ENCODE measurements at regions of chr4 and their contacts with region 1.

Region 1: DNA sequence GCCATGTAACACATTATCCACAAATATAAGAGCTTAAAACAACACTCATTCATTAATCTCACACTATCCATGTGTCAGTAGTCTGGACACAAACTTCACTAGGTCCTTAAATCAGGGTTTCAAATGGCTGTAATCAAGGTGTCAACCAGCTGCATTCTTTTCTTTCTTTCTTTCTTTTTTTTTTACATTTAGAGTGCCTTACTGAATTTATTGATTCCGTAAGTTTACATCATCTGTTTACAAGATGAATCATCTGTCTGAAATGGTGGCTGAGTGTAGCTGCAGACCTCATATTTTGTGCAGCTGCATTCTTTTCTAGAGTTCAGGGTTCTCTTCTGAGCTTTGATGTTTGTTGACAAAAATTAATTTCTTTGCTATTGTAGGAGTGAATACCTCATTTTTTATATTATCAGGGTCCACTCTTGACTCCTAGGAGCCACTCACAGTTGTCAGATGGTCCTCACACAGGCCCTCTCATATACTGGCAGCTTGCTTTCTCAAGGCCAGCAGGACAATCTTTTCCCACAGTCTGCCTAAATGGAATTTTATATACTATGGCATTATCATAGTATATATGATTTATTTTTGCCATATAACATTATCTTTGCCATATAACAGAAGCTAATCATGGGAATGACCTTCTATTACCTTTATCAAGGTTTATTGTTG is 37.8 kb downstream of the SPOCK3 start:
- DNase-seq: no peak
- H3K4me3 ChIP-seq: no peak overlapping the region
- H3K27ac ChIP-seq: no peak overlapping the region
- H3K4me1 ChIP-seq: no peaks in the 10 kb centered on the region
- H3K27me3 ChIP-seq: no peaks in the 10 kb centered on the region
- CTCF ChIP-seq: no peak
- POLR2A ChIP-seq: no peak

Region 2: GRCh38 chr4:167183036-167183435 is 13.4 kb before region 1 on chr4:
- CTCF ChIA-PET with region 1: interaction called, 3 read pairs
- POLR2A ChIA-PET with region 1: no interaction called
- dilution Hi-C with region 1: no loop called
- intact Hi-C with region 1: loop called (anchors 1 kb)
- DNase-seq: no peak
- H3K4me3 ChIP-seq: no peak overlapping the region
- H3K27ac ChIP-seq: no peak overlapping the region
- H3K4me1 ChIP-seq: no peaks in the 10 kb centered on the region
- H3K27me3 ChIP-seq: no peaks in the 10 kb centered on the region
- CTCF ChIP-seq: no peak
- POLR2A ChIP-seq: no peak